K562 (cell line): ENCODE measurements at regions of chr1 and their contacts with region 1.

Region 1: GRCh38 chr1:230922620-230923019 is 54.3 kb upstream of the C1orf198 start:
- DNase-seq: peak in 1 of 4 experiments; percentile 20
- ATAC-seq: peak; percentile 80
- H3K4me3 ChIP-seq: no peak overlapping the region
- H3K27ac ChIP-seq: no peak overlapping the region
- H3K4me1 ChIP-seq: no peaks in the 10 kb centered on the region; a peak in 2 of 5 replicates
- H3K27me3 ChIP-seq: no peaks in the 10 kb centered on the region
- CTCF ChIP-seq: peak; percentile 29 to 50 (median 30); a peak in 3 of 6 replicates
- EP300 ChIP-seq: no peak
- POLR2A ChIP-seq: no peak
- RAD21 ChIP-seq: peak; percentile 28 to 53

Region 2: DNA sequence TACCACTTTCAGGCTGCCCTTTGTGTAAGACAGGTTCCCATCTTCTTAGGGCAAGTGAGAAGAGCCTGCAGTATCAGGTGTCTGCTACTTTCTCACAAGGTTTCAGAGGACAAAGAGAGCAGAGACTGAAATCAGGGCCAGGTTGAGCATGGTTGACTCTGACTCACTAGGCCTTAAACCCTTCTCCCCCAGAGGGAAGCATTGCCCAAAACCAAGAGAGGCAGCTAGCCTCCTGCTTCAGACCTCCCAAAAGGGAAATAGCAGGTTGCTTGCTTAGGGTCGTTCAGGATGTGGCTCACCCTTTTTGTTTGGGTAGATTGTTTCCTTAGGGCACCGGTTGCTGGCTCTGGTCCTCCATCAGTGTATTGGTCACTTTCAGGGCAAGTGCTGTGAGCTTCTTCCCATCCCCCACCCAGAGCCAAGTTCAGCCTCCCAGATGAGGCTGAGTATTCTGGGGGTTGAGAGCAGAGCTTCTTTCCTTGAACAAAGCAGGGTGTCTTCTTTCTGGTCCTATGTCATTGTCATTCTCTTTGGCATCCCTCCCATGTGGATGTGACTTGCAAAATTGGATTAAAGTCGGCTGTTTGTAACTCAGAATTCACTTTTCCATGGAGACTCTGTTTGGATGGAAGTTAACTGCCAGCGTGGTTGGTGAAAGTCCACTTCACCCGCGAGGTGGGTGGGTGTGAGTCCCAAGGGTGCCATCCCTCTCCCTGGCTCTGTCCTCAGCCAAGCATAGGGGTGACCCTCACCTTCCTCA is 911.1 kb before region 1 on chr1:
- CTCF ChIA-PET with region 1: no interaction called
- POLR2A ChIA-PET with region 1: no interaction called
- in situ Hi-C with region 1: no loop called
- intact Hi-C with region 1: no loop called
- DNase-seq: no peak
- ATAC-seq: no peak; the same call in 2 of the 3 replicates
- H3K4me3 ChIP-seq: no peak overlapping the region
- H3K27ac ChIP-seq: no peak overlapping the region
- H3K4me1 ChIP-seq: no peaks in the 10 kb centered on the region; a peak in 1 of 5 replicates
- H3K27me3 ChIP-seq: peaks cover 42 to 46% of the 10 kb centered on the region in 2 experiments
- CTCF ChIP-seq: no peak
- EP300 ChIP-seq: no peak
- POLR2A ChIP-seq: no peak
- RAD21 ChIP-seq: no peak

Region 3: DNA sequence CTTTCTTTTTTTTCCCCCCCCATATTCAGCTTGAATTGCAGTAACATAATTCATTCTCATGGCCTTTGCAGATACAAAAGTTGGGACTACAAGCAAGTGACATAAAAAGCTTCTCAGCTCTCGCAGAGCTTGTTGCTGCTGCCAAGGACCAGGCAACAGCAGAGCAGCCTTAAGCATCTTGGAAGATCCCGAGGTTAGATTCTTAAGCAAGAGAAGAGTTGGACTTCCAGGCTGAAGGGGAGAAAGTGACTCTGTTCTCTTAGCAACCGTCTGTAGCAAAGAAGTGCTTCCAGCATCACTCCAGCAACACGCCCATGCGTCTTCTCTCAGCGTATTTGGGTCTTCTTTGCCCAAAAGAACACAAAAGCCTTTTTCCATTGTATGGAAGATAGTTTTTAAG is 229.4 kb before region 1 on chr1:
- CTCF ChIA-PET with region 1: no interaction called
- POLR2A ChIA-PET with region 1: no interaction called
- in situ Hi-C with region 1: no loop called
- intact Hi-C with region 1: no loop called
- DNase-seq: no peak
- ATAC-seq: no peak
- H3K4me3 ChIP-seq: no peak overlapping the region
- H3K27ac ChIP-seq: no peak overlapping the region
- H3K4me1 ChIP-seq: no peaks in the 10 kb centered on the region; a peak in 1 of 5 replicates
- H3K27me3 ChIP-seq: peaks cover 2 to 15% of the 10 kb centered on the region in 2 experiments; a peak in 4 of 5 replicates
- CTCF ChIP-seq: no peak
- EP300 ChIP-seq: no peak
- POLR2A ChIP-seq: no peak
- RAD21 ChIP-seq: no peak

Region 4: GRCh38 chr1:231099996-231100767 is 177.6 kb after region 1 on chr1:
- CTCF ChIA-PET with region 1: no interaction called
- POLR2A ChIA-PET with region 1: no interaction called
- in situ Hi-C with region 1: loop called (anchors 5 kb)
- intact Hi-C with region 1: no loop called
- DNase-seq: no peak
- ATAC-seq: no peak
- H3K4me3 ChIP-seq: no peak overlapping the region
- H3K27ac ChIP-seq: no peak overlapping the region
- H3K4me1 ChIP-seq: no peaks in the 10 kb centered on the region; a peak in 1 of 5 replicates
- H3K27me3 ChIP-seq: peaks cover 17 to 32% of the 10 kb centered on the region in 2 experiments
- CTCF ChIP-seq: no peak
- EP300 ChIP-seq: no peak
- POLR2A ChIP-seq: no peak
- RAD21 ChIP-seq: no peak